Activated CD8-positive, alpha-beta memory T cell treated with anti-CD3 and anti-CD28 coated beads, Interleukin-2, amount 10 ng/mL, durations not matched to agents 7 days and 5 days (primary cell): ENCODE measurements at regions of chr5 and their contacts with region 1.

Region 1: DNA sequence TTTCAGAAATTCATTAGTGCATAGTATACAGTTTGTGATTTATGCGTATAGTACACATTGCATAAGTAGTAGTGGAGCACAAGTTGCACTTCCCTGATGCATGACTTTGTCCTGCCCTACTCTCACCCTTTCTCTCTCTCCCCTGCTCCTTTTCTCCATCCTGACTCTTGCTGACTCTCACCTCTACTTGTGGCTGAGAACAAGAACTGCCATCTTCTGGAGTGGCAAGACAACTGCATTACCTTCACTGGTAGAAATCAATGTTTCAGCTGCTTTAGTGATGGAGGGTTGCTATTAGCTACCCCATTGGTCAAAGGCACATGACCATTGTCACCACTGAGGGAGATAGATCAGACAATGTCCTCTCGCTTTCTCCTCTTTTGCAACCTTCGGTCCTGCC is 26.9 kb downstream of the SPEF2 start:
- DNase-seq: no peak
- ATAC-seq: no peak
- H3K4me3 Mint-ChIP-seq: no peak overlapping the region
- H3K27ac Mint-ChIP-seq: no peak overlapping the region
- H3K4me1 Mint-ChIP-seq: no peaks in the 10 kb centered on the region
- H3K27me3 Mint-ChIP-seq: no peaks in the 10 kb centered on the region

Region 2: DNA sequence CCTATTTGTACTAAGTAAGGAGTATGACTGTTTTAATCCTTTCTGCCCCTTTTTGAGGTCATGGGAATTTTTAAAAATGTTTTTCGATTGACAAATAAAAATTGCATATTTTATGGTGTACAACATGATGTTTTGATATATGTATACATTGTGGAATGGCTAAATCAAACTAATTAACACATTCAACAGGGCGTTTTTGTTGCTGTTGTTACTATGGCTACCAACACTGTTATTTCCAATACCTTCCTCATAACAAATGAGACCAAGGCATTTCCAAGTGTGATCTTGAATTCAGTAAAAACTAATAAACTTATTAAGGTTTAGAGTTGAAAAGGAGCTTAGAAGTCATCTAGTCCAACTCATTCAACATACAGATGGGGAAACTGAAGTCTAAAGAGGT is 57.1 kb before region 1 on chr5:
- CTCF ChIA-PET with region 1: no interaction called
- DNase-seq: no peak
- ATAC-seq: no peak
- H3K4me3 Mint-ChIP-seq: no peak overlapping the region
- H3K27ac Mint-ChIP-seq: no peak overlapping the region
- H3K4me1 Mint-ChIP-seq: no peaks in the 10 kb centered on the region
- H3K27me3 Mint-ChIP-seq: peaks cover 57% of the 10 kb centered on the region

Region 3: GRCh38 chr5:35617435-35618303 is 26.9 kb before region 1 on chr5 and contains the start of gene SPEF2:
- CTCF ChIA-PET with region 1: interaction called, 14 read pairs
- DNase-seq: peak; percentile 91
- ATAC-seq: peak; percentile 94
- H3K4me3 Mint-ChIP-seq: peak within 1 kb of the TSS; percentile 84
- H3K27ac Mint-ChIP-seq: peak within 1 kb of the TSS; percentile 99
- H3K4me1 Mint-ChIP-seq: peaks cover 47% of the 10 kb centered on the region
- H3K27me3 Mint-ChIP-seq: no peaks in the 10 kb centered on the region
- total RNA-seq, gene SPEF2: 5.6 to 14.1 TPM

Region 4: GRCh38 chr5:35745667-35746066 is 101.1 kb after region 1 on chr5:
- CTCF ChIA-PET with region 1: no interaction called
- DNase-seq: no peak
- ATAC-seq: no peak
- H3K4me3 Mint-ChIP-seq: no peak overlapping the region
- H3K27ac Mint-ChIP-seq: peak overlapping the region; percentile 37
- H3K4me1 Mint-ChIP-seq: peaks cover 41% of the 10 kb centered on the region
- H3K27me3 Mint-ChIP-seq: no peaks in the 10 kb centered on the region

Region 5: DNA sequence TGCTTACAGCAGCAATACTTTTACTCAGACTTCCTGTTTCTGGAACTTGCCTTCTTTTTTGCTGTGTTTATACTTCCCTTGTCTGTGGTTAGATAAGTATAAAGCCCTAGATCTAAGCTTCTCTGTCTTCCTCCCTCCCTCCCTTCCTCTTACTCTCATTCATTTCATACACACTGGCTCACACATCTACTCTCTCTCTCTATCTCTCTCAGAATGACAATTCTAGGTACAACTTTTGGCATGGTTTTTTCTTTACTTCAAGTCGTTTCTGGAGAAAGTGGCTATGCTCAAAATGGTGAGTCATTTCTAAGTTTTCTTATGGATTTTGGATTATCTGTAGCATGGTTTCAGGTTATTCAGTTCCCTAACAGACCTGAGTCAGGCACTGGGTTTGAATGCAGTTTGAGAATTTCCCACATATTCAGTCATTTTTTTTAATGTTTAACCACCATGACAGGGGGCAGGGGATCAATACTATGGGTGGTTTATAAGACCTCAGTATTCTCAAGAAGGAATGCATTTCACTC is 212.3 kb after region 1 on chr5 and contains the start of gene IL7R:
- CTCF ChIA-PET with region 1: no interaction called
- DNase-seq: no peak
- ATAC-seq: peak; percentile 73
- H3K4me3 Mint-ChIP-seq: peak within 1 kb of the TSS; percentile 80
- H3K27ac Mint-ChIP-seq: peak within 1 kb of the TSS; percentile 96
- H3K4me1 Mint-ChIP-seq: peaks cover 95% of the 10 kb centered on the region
- H3K27me3 Mint-ChIP-seq: no peaks in the 10 kb centered on the region
- total RNA-seq, gene IL7R: 10.4 to 30.7 TPM